Left colon (tissue), 2 donors: ENCODE measurements at regions of chr11 and their contacts with region 1.

Region 1: DNA sequence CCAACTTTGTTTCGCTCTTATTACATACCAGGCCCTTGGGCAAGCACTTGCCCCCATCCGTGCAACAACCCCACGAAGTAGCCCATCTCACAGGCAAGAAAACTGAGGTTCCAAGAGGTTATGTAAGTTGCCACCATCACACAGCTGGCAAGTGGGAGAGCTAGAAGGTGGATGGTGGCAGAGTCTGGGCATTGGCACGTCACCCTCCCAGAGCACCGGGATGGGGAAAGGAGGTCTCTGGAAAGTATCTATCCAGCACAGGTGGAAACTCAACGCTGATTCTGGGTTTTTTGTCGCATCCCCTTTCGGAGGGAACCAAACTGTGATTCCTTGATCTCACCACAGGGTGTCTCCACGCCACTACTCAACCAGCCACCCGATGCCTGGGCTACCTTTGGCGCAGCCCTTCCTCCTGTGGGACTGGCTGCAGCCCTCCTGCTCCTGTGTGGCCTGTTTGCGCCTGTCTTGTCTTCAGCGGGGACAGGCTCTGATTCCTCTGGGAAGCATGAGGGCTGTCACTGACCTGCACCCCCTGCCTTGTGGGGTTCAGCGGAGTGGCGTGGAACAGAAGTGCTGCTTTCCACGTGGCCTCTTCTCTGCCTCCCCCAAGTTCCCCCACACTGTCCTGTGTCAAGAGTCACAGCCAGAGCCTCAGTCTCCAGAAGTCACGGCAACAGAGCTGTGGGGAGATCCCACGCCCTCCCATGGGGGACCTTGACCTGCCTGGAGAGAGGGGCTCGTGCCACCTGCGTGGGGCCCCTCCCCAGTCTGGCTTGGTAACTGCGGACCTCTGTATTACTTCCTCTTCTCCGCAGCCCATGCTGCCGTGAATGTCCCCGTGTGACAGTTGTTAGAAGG is 34.4 kb upstream of the TRIM29 start:
- DNase-seq: peak; percentile 66 to 74
- ATAC-seq: peak; percentile 73

Region 2: DNA sequence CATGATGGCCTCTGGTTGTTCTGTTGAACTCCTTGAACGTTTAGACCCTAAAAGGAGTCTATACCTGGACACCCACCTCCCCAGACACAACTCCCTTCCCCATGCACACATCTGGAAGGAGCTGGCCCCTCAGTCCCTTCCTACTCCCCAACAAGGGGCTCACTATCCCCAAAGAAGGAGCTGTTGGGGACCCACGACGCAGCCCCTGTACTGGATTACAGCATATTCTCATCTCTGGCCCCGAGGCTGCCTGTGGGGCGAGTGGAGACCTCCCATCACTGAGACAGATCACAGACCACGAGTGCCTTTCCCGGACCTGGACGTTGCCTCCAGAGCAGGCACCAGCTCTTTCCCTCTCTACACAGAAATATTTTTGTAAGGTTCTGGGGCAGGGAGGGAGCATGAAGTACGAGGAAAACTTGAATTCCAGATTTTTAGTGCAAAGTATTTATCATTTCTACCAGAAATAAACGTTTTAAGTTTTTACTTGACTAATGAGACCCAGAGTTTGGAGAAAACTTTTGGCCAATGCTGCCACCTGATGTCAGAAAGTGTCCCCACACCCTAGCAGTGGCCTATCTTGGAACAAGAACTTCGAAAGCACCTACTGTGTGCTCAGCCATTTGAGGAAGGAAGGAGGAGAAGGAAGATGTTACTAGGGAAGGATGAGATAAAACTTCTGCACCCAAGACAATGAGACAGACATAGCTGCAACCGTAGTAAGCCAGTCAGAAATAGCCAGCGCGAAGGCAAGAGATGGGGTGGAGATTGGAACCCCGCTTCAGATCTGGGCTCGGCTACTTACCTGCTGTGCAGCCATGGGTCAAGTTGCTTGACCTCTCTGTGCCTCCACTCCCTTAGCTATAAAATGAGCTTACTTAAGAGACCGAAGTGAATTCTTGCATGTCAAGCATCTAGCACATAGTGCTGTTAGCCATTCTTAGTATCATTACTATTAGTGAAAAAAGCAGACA is 57.5 kb after region 1 on chr11:
- intact Hi-C with region 1: loop called (anchors 2 to 5 kb)
- DNase-seq: no peak
- ATAC-seq: no peak

Region 3: DNA sequence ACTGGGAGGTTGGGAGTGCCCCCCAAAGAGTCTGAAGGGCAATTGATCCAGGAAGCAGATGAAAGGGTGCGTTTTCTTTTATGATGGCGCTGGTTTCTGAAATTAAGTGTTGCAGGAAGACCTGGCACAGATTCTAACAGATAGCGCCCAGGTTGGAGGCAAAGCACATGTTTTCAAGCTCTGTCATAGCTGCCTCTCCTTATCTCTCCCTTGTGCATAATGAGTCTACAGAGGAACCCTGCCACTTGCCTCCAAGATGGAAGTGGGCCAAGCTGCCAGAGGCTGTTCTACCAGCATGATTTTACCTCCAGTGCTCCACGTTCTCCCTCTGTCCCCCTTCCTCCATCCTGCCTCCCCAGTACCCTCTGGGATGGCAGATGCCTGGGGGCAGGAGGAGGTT is 122.8 kb after region 1 on chr11:
- intact Hi-C with region 1: loop called (anchors 5 to 10 kb)
- DNase-seq: no peak
- ATAC-seq: peak; percentile 60

Region 4: DNA sequence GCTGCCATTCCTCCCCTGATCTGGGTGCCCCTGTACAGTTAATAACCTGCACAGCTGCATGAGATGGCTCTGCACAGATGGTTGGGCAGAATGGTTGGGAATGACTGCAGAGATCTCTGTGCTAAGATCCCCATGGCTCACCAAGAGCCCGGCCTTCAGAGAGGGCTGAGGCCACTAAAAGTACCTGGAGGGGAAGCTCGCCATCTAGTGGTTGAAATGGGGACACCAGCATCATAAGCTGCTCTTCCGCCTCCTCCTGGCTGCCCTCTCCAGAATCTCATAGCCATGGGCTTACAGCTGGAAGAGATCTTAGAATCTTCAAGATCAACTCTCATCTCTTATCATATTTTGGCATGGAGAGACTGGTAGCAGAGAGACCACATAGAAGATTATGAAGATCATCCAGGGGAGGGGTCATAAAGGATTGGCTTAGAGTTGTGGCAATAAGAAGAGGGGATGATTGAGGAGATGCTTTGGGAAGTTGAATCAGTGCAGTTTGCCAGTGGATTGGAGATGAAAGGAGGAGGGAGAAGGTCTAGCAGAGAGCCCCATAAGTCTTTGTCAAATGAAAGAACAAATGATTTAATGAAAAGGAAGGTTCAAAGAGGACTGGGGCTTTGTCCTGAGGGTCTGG is 130.8 kb after region 1 on chr11:
- intact Hi-C with region 1: loop called (anchors 5 to 10 kb)
- DNase-seq: peak; percentile 70 to 86
- ATAC-seq: peak; percentile 61